Ovary (tissue), 10 donors: ENCODE measurements at regions of chr2 and their contacts with region 1.

Region 1: DNA sequence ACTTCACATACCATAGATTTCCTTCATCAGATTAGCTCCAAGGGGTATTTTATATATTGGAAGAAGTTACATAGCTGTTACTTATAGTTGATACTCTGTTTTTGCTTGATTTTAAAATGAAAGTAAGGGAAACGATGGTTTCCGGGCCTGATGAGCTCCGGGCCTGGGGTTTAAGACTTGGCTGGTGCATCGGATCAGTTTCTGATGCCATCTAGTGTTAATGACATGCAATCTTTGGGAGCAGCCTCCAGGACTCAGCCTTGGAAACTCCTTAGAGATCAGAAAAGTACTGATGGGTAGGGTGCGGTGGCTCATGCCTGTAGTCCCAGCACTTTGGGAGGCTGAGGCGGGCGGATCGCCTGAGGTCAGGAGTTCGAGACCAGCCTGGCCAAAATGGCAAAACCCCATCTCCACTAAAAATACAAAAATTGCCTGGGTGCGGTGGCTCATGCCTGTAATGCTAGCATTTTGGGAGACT is 47.1 kb upstream of the CNOT11 start:
- DNase-seq: peak; percentile 53 to 65 (median 55)
- H3K4me3 ChIP-seq: no peak overlapping the region
- H3K27ac ChIP-seq: no peak overlapping the region
- H3K4me1 ChIP-seq: no peaks in the 10 kb centered on the region
- H3K27me3 ChIP-seq: no peaks in the 10 kb centered on the region
- CTCF ChIP-seq: peak; percentile 10 to 48 (median 42)
- EP300 ChIP-seq: no peak
- POLR2A ChIP-seq: no peak

Region 2: GRCh38 chr2:101007415-101008345 is 197.9 kb before region 1 on chr2:
- intact Hi-C with region 1: loop called in 3 of 4 experiments (anchors 5 to 10 kb)
- DNase-seq: no peak
- H3K4me3 ChIP-seq: no peak overlapping the region
- H3K27ac ChIP-seq: no peak overlapping the region
- H3K4me1 ChIP-seq: peaks cover 2% of the 10 kb centered on the region
- H3K27me3 ChIP-seq: no peaks in the 10 kb centered on the region
- CTCF ChIP-seq: no peak
- EP300 ChIP-seq: no peak
- POLR2A ChIP-seq: no peak

Region 3: DNA sequence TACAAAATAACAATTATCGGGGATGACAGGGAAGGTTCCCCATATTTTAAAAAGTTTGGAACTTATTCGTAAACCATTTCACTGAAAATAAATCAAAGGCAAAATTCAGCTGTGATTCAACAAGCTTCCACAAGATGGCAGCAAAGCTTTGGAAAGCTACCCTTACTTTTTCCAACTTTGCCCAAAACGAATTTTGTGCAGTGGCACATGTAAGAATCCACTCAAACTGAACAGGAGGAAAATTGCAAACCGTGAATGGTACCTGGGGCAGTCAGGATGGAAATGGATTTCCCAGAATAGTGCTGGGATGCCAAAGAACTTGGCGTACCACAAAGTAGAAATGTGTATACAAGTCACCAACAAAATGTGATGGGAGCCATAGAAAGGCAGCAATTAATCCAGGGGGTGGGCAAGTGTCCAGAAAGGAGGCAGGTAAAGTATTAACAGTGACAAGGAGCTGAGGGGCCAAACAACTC is 192.8 kb before region 1 on chr2:
- intact Hi-C with region 1: loop called in 3 of 4 experiments (anchors 5 to 10 kb)
- DNase-seq: peak in 1 of 5 donors; percentile 53
- H3K4me3 ChIP-seq: no peak overlapping the region
- H3K27ac ChIP-seq: no peak overlapping the region
- H3K4me1 ChIP-seq: no peaks in the 10 kb centered on the region
- H3K27me3 ChIP-seq: no peaks in the 10 kb centered on the region
- CTCF ChIP-seq: peak; percentile 73 to 81 (median 81)
- EP300 ChIP-seq: no peak
- POLR2A ChIP-seq: no peak

Region 4: GRCh38 chr2:101036562-101037457 is 168.8 kb before region 1 on chr2:
- intact Hi-C with region 1: loop called in 1 of 4 experiments (anchors 5 kb)
- DNase-seq: no peak
- H3K4me3 ChIP-seq: no peak overlapping the region
- H3K27ac ChIP-seq: no peak overlapping the region
- H3K4me1 ChIP-seq: no peaks in the 10 kb centered on the region
- H3K27me3 ChIP-seq: no peaks in the 10 kb centered on the region
- CTCF ChIP-seq: peak in 1 of 3 donors; percentile 16
- EP300 ChIP-seq: no peak
- POLR2A ChIP-seq: no peak

Region 5: GRCh38 chr2:101252408-101253012 is 47.0 kb after region 1 on chr2 and contains the start of gene CNOT11:
- intact Hi-C with region 1: loop called in 1 of 4 experiments (anchors 1 kb)
- DNase-seq: peak; percentile 99 to 100 (median 100)
- H3K4me3 ChIP-seq: peak within 1 kb of the TSS; percentile 80
- H3K27ac ChIP-seq: peak within 1 kb of the TSS; percentile 56 to 79
- H3K4me1 ChIP-seq: peaks cover 11% of the 10 kb centered on the region
- H3K27me3 ChIP-seq: no peaks in the 10 kb centered on the region
- CTCF ChIP-seq: no peak
- EP300 ChIP-seq: no peak
- POLR2A ChIP-seq: peak; percentile 70
- total RNA-seq, gene CNOT11: 17.6 to 26.9 (median 21.0) TPM